ENCODE measurements at regions of chr18 and their contacts with region 1.

Region 1: DNA sequence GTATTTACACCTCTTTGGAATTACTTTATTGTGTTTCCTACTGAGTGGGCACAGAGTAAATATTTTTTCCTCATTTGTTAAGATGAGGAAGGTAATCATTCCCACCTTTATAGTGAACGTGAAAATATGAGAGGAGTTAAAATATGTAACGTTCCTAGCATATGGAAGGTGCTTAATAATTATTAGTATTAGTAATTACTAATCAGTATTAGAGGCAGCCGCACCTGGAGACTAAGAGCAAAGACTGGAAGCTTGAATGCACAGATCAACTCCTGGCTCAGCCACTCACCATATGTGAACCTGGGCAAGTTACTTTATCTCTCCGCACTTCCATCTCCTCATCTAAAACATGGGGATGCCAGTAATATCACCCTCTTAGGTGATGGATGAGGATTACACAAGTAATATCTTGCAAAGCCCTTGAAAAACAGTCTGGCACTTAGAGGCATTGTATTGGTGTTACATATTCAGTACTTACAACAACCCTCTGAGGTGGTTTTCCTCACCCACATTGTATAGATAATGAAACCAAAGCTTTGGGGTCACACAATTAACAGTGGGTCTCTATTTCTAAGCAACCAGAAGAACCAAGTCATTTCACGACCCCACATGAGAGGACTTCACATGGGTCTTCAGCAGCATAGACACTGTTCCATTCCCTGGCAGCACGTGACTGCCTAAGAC is 100.3 kb upstream of the KCTD1 start:
- DNase-seq: no peak
- ATAC-seq: no peak
- H3K4me3 ChIP-seq: no peak overlapping the region
- H3K27ac ChIP-seq: no peak overlapping the region
- H3K4me1 ChIP-seq: no peaks in the 10 kb centered on the region
- H3K27me3 ChIP-seq: no peaks in the 10 kb centered on the region

Region 2: GRCh38 chr18:26383454-26384270 is 265.0 kb before region 1 on chr18:
- intact Hi-C with region 1: loop called in 1 of 2 experiments (anchors 5 kb)
- DNase-seq: no peak
- ATAC-seq: peak; percentile 75
- H3K4me3 ChIP-seq: no peak overlapping the region
- H3K27ac ChIP-seq: no peak overlapping the region
- H3K4me1 ChIP-seq: no peaks in the 10 kb centered on the region
- H3K27me3 ChIP-seq: no peaks in the 10 kb centered on the region